Caco-2 (cell line): ENCODE measurements at regions of chr3 and their contacts with region 1.

Region 1: DNA sequence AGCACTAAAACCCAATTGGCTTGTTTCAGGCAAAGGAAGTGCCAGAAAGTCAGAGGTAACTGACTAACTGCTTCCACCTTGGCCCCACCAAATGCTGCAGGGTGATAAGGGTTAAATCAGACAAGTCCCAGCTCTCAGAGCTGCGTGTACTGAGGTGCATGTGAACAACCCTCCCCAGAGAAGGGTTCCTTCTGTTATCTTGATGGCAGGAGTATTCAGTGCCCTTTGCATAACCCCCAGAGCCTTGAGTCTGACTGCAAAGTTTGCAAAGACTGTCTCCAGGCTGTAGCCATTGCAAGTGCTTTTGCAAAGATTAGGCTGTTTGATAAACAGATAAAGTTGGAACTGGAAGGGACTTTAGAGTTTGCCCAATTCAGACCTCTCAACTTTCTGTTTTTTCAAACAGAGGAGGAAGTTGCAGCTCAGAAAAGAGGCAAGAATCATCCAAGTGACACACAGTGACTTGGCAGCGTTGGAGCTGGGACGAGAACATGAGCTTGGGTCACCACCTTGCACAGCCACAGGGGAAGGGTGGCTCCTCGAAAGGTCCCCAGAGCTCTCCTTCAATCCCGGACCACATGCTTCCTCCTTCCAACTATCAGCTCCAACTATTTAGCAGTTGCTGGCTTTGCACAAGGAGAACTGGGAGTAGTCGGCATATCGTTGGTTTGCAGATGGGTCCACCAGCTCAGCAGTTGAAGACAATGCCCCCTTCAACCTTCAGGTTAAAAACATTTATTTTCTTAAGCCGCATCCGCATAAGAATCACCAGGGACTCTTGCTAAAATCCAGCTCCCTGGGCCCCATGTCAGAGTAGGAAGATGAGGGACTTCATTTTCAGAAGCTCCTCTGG is 224.8 kb upstream of the HES1 start:
- DNase-seq: peak; percentile 75 to 90
- H3K4me3 ChIP-seq: peak overlapping the region; percentile 37
- H3K4me3 Mint-ChIP-seq: peak overlapping the region; percentile 74
- H3K27ac Mint-ChIP-seq: peak overlapping the region; percentile 90
- H3K4me1 ChIP-seq: peaks cover 66% of the 10 kb centered on the region
- H3K4me1 Mint-ChIP-seq: peaks cover 40% of the 10 kb centered on the region
- H3K27me3 ChIP-seq: no peaks in the 10 kb centered on the region
- H3K27me3 Mint-ChIP-seq: no peaks in the 10 kb centered on the region
- CTCF ChIP-seq: no peak

Region 2: GRCh38 chr3:193665370-193665989 is 245.6 kb before region 1 on chr3:
- CTCF ChIA-PET with region 1: no interaction called
- POLR2A ChIA-PET with region 1: no interaction called
- intact Hi-C with region 1: loop called (anchors 10 kb)
- DNase-seq: peak in 1 of 2 experiments; percentile 6
- H3K4me3 ChIP-seq: no peak overlapping the region
- H3K4me3 Mint-ChIP-seq: no peak overlapping the region
- H3K27ac Mint-ChIP-seq: no peak overlapping the region
- H3K4me1 ChIP-seq: no peaks in the 10 kb centered on the region
- H3K4me1 Mint-ChIP-seq: no peaks in the 10 kb centered on the region
- H3K27me3 ChIP-seq: no peaks in the 10 kb centered on the region
- H3K27me3 Mint-ChIP-seq: no peaks in the 10 kb centered on the region
- CTCF ChIP-seq: peak in 1 of 2 experiments; percentile 53

Region 3: DNA sequence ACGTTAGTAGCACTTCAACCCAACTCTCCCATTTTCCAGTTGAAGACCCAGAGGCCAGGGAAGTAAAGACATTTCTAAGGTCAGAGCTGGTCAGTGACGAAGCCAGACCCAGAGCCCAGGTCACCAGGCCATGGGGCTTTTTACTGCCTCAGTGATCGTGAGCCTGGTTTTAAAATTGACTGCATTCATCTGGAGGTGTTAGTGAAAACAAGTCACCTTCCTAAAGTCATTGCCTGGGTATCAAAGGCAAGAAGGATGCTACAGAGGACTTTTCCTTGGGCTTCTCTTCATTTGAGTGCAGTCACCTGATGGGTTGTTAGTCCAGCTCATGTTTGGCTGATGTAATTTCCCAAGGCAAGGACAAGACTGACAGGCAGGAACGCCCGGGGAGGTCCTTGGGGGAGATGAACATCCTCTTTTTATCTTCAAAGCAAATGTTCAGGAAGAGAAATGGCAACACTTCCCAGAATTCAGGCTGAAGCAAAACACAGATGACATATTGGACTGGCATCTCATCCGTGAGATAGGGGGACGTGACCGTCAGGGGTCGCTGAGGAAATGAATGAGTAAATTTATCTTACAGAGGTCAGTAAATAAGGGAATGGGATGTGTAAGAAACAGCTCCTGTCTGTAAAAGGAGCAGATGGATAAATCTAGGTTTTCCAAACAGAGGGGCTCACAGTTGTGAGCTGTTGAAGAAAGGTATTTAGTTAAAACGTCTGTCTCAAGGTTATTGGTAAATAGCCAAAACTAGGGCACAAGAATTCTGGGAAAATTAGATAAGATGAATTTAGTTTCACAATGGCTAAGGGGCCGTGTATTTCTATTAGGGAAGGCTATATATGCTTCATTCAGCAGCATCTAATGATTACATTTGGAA is 116.9 kb before region 1 on chr3:
- CTCF ChIA-PET with region 1: no interaction called
- POLR2A ChIA-PET with region 1: no interaction called
- intact Hi-C with region 1: loop called (anchors 1 kb)
- DNase-seq: peak; percentile 58 to 65
- H3K4me3 ChIP-seq: no peak overlapping the region
- H3K4me3 Mint-ChIP-seq: peak overlapping the region; percentile 11
- H3K27ac Mint-ChIP-seq: peak overlapping the region; percentile 64
- H3K4me1 ChIP-seq: peaks cover 43% of the 10 kb centered on the region
- H3K4me1 Mint-ChIP-seq: peaks cover 47% of the 10 kb centered on the region
- H3K27me3 ChIP-seq: no peaks in the 10 kb centered on the region
- H3K27me3 Mint-ChIP-seq: no peaks in the 10 kb centered on the region
- CTCF ChIP-seq: no peak

Region 4: DNA sequence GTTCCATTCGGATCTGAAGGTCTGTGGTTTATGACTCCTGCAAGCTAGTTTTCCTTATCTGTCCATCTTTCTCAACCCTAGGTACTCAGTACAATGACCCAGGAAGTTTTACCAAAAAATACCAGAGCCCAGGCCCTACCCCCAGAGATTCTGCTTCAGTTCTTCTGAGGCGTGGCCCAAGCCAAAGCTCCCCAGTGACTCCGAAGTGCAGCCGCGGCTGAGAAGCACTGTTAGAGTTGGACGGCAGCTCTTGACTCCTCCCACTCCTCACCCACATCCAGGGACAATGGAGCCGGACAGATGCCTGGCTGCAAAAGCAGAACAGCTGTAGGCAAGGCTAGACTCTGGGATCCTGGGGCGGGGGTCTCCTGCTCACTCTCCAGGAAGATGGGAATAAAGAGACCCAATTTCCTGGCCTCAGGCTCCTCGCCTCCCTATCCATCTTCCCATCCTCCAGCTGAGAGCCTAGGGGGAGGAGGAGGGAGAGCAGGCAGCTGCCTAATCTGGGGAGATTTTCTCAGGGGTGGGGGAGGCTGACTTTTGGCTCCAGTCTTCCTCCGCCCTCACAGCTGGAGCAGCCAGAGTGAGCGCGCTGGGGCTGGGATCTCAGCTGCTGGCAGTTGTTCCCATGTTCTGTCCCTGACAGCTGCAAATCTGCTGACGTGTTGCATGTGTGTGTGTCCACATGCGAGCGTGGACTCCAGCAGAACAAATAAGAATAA is 94.4 kb before region 1 on chr3:
- CTCF ChIA-PET with region 1: interaction called, 4 read pairs
- POLR2A ChIA-PET with region 1: interaction called, 4 read pairs
- intact Hi-C with region 1: loop called (anchors 1 kb)
- DNase-seq: peak; percentile 83 to 88
- H3K4me3 ChIP-seq: peak overlapping the region; percentile 9
- H3K4me3 Mint-ChIP-seq: peak overlapping the region; percentile 46
- H3K27ac Mint-ChIP-seq: peak overlapping the region; percentile 45
- H3K4me1 ChIP-seq: peaks cover 54% of the 10 kb centered on the region
- H3K4me1 Mint-ChIP-seq: peaks cover 43% of the 10 kb centered on the region
- H3K27me3 ChIP-seq: no peaks in the 10 kb centered on the region
- H3K27me3 Mint-ChIP-seq: no peaks in the 10 kb centered on the region
- CTCF ChIP-seq: no peak

Region 5: GRCh38 chr3:193851941-193852674 is 59.0 kb before region 1 on chr3:
- CTCF ChIA-PET with region 1: no interaction called
- POLR2A ChIA-PET with region 1: interaction called, 3 read pairs
- intact Hi-C with region 1: loop called (anchors 1 kb)
- DNase-seq: no peak
- H3K4me3 ChIP-seq: no peak overlapping the region
- H3K4me3 Mint-ChIP-seq: peak overlapping the region; percentile 20
- H3K27ac Mint-ChIP-seq: peak overlapping the region; percentile 84
- H3K4me1 ChIP-seq: peaks cover 56% of the 10 kb centered on the region
- H3K4me1 Mint-ChIP-seq: peaks cover 40% of the 10 kb centered on the region
- H3K27me3 ChIP-seq: no peaks in the 10 kb centered on the region
- H3K27me3 Mint-ChIP-seq: no peaks in the 10 kb centered on the region
- CTCF ChIP-seq: no peak

Region 6: DNA sequence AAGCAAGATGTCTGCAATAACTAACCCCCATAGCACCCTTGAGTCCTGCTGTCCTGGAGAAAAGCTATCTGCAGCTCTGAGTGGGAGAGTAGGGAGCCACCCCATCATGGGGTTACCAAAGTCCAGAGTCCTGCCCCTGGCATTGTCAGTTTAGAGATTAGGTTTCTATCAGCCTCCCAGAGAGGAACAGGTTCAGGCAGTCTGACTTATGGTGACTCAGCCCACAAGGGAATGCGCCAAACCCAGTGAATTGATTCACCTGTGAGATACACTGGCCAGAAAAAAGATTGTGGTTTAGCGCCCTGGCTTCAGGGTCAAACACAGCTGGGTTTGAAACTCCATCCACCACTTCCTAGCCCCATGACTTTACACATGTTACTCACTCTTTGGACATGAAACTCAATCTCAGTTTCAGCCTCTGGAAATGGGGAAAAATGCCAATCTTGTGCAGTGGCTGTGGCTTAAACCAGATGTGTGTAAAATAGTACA is 38.8 kb before region 1 on chr3:
- CTCF ChIA-PET with region 1: interaction called, 3 read pairs
- POLR2A ChIA-PET with region 1: interaction called, 6 read pairs
- intact Hi-C with region 1: loop called (anchors 1 kb)
- DNase-seq: peak; percentile 91 to 94
- H3K4me3 ChIP-seq: no peak overlapping the region
- H3K4me3 Mint-ChIP-seq: peak overlapping the region; percentile 50
- H3K27ac Mint-ChIP-seq: peak overlapping the region; percentile 88
- H3K4me1 ChIP-seq: peaks cover 83% of the 10 kb centered on the region
- H3K4me1 Mint-ChIP-seq: peaks cover 74% of the 10 kb centered on the region
- H3K27me3 ChIP-seq: no peaks in the 10 kb centered on the region
- H3K27me3 Mint-ChIP-seq: no peaks in the 10 kb centered on the region
- CTCF ChIP-seq: no peak

Region 7: DNA sequence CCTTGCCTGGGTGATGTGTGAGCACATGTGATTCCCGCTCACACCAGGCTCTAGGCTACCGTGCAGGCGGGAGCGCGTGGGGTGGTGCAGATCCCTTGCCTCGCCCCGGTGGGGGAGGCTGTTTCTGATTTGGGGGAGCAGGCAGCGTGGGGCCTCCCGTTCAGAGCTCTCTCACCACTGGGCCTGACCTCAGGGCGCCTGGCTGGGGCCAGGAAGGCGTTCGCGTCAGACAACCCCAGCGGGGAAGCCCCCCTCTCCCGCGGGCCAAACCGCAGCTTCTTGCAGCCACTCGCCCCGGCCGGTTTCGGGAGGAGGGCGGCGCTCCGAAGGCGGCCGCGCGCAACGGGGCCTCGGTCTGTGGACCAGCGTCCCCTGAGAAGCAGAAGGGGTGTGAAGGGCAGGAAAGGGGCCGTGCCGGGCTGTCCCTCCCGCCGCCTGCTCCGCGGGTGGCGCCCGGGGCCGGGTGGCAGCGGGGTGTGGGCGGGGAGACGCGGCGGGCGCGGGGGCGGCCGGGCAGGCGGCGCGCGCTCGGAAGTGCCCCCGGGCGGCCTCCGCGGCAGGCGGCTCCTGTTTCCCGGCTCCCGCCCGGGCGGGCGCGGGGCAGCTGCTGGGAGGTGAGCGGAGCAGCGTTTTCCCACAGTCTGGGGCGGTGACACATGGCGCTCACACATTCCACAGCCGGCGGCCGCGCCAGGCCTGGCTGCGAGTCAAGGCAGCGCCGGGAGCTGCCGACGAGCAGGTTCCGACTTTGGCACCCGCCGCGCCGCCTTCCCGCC is 159.7 kb after region 1 on chr3:
- CTCF ChIA-PET with region 1: no interaction called
- POLR2A ChIA-PET with region 1: interaction called, 10 read pairs
- intact Hi-C with region 1: no loop called
- DNase-seq: peak; percentile 87 to 89
- H3K4me3 ChIP-seq: peak overlapping the region; percentile 52
- H3K4me3 Mint-ChIP-seq: peak overlapping the region; percentile 88
- H3K27ac Mint-ChIP-seq: peak overlapping the region; percentile 94
- H3K4me1 ChIP-seq: peaks cover 44% of the 10 kb centered on the region
- H3K4me1 Mint-ChIP-seq: peaks cover 33% of the 10 kb centered on the region
- H3K27me3 ChIP-seq: no peaks in the 10 kb centered on the region
- H3K27me3 Mint-ChIP-seq: no peaks in the 10 kb centered on the region
- CTCF ChIP-seq: no peak